Endothelial cell of umbilical vein (primary cell): ENCODE measurements at regions of chr2 and their contacts with region 1.

Region 1: GRCh38 chr2:191501561-191502168 is 176.3 kb upstream of the NABP1 start:
- DNase-seq: peak; percentile 59
- H3K4me3 ChIP-seq: no peak overlapping the region
- H3K27ac ChIP-seq: no peak overlapping the region
- H3K4me1 ChIP-seq: no peaks in the 10 kb centered on the region
- H3K27me3 ChIP-seq: no peaks in the 10 kb centered on the region
- CTCF ChIP-seq: peak; percentile 16 to 21
- POLR2A ChIP-seq: no peak

Region 2: GRCh38 chr2:191165176-191165643 is 336.5 kb before region 1 on chr2:
- CTCF ChIA-PET with region 1: interaction called, 70 read pairs
- POLR2A ChIA-PET with region 1: no interaction called
- dilution Hi-C with region 1: no loop called
- intact Hi-C with region 1: loop called (anchors 1 kb)
- DNase-seq: peak; percentile 68
- H3K4me3 ChIP-seq: no peak overlapping the region
- H3K27ac ChIP-seq: no peak overlapping the region
- H3K4me1 ChIP-seq: peaks cover 3% of the 10 kb centered on the region
- H3K27me3 ChIP-seq: no peaks in the 10 kb centered on the region
- CTCF ChIP-seq: peak; percentile 48 to 52
- POLR2A ChIP-seq: no peak

Region 3: GRCh38 chr2:191231995-191232394 is 269.7 kb before region 1 on chr2:
- CTCF ChIA-PET with region 1: interaction called, 7 read pairs
- POLR2A ChIA-PET with region 1: no interaction called
- dilution Hi-C with region 1: no loop called
- intact Hi-C with region 1: loop called (anchors 1 kb)
- DNase-seq: no peak
- H3K4me3 ChIP-seq: no peak overlapping the region
- H3K27ac ChIP-seq: no peak overlapping the region
- H3K4me1 ChIP-seq: no peaks in the 10 kb centered on the region
- H3K27me3 ChIP-seq: no peaks in the 10 kb centered on the region
- CTCF ChIP-seq: peak; percentile 9 to 12
- POLR2A ChIP-seq: no peak

Region 4: DNA sequence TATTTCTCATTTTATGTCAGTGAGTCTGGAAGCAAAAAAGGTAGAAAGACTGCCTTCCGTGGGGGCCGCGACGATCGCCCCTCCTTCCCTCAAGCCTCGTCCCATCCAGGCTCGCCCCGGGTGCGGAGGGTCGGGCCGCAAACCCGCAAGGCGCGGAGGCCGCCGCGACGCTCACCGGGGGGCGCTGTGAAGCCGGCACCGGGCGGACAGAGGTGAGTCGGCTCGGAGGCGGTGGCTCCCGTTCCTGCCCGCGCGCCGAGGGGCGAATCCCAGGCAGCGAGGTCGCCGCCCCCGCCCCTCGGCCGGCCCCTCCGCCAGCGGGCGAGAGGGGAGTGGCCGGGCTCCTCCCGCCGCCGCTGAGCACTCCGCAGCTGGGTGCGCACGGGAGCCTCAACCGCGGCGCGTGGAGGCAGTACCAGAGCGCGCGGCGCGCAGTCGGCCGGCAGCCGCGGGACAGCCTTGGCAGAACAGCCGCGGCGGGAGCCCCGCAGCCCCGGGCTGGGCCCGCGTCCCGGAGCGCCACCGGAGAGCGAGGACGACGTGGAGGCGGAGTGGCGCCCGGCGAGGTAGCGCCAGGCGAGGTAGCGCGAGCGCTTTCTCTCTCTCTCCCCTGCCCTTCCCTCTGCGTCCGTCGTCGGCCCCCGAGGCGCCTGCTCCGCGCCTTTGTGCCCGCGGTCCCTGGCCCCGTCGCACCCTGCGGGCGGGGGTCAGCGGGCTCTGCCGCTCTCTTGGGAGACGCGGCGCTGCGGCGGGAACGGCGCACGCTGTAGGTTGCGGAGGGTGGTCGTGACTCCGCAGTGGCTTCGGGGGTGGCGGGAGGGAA is 256.4 kb before region 1 on chr2 and contains the start of gene MYO1B:
- CTCF ChIA-PET with region 1: interaction called, 3 read pairs
- POLR2A ChIA-PET with region 1: no interaction called
- dilution Hi-C with region 1: no loop called
- intact Hi-C with region 1: loop called (anchors 1 kb)
- DNase-seq: peak; percentile 68
- H3K4me3 ChIP-seq: peak within 1 kb of the TSS; percentile 56 to 78 (median 78)
- H3K27ac ChIP-seq: peak within 1 kb of the TSS; percentile 85
- H3K4me1 ChIP-seq: peaks cover 21% of the 10 kb centered on the region
- H3K27me3 ChIP-seq: no peaks in the 10 kb centered on the region
- CTCF ChIP-seq: peak; percentile 57
- POLR2A ChIP-seq: peak; percentile 57
- total RNA-seq, gene MYO1B: 51.1 and 55.4 TPM in 2 replicates

Region 5: DNA sequence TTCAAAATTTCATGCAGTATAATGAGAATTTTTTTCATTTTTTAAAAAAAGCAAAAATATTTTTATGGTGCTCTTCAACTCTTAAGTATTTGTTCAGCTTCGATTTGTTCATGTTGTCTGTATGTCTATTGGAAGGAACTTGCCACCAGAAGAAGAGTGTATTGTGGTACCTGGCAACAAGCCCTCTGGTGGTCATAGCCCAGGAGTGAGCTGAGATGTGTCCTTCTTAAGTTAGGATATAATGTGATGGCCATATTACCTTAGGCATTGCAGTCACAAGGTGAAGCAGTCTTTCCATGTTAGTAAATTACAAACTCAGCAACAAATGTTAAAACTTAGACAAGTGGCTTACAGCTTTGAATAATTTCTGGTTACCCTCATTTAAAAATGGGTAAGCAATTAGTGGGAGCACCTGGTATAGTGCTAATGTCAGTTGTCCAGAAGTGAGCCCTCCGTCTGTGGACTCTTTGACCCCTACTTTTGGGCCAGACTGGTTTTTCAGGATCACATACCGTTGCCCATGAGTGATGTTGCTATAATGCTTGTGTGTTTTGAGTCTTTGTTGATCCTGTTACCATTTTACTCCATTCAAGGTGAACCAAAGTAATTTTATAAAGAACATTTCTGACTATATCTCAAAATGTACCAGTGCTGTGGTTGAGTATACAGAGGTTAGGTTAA is 199.1 kb before region 1 on chr2:
- CTCF ChIA-PET with region 1: interaction called, 4 read pairs
- POLR2A ChIA-PET with region 1: no interaction called
- dilution Hi-C with region 1: no loop called
- intact Hi-C with region 1: loop called (anchors 1 kb)
- DNase-seq: peak; percentile 17
- H3K4me3 ChIP-seq: no peak overlapping the region
- H3K27ac ChIP-seq: no peak overlapping the region
- H3K4me1 ChIP-seq: no peaks in the 10 kb centered on the region
- H3K27me3 ChIP-seq: no peaks in the 10 kb centered on the region
- CTCF ChIP-seq: peak; percentile 12 to 25
- POLR2A ChIP-seq: no peak